ENCODE measurements at regions of chr20 and their contacts with region 1.

Region 1: DNA sequence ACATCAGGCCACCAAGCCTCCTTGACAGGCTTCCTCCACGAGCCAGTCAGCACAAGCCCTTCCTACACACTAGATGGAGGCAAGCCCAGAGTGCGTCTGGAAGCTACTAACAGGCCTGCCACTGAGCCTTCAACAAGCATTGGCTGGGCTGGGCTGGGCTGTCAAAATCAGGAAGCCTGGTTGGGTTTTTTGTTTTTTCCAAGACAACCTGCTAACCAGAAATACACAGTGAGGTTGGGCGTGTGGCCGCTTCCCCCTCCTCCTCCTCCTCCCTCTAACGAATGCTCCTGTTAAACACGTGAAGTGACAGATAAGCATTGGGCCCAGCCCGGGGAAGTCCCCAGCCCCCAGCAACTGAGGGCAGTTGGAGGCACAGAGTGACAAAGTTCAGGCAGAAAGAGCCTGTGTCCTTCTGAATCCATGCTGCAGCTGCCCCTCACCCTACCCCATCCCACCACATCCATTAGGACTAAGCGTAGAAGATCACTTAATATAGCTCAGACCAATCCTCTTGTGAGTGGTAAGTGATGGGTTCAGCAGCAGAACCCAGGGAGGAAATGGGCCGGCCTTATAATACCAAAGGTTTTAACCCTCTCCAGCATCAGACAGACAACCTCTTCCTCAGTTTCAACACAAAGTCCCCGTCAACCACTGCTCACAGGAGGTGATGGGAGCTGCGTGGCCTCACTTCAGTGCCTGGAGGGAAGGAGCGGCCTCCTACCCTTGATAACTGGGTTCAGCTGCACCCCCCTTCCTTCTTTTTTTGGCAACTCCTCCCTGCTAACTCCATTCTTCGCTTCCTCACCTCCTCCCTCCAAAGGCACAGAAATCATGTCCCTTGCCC is 1.1 kb downstream of the NFATC2 start:
- DNase-seq: no peak
- ATAC-seq: peak; percentile 77
- H3K4me3 ChIP-seq: peak overlapping the region; percentile 88
- H3K27ac ChIP-seq: peak overlapping the region; percentile 82
- H3K4me1 ChIP-seq: peaks cover 23% of the 10 kb centered on the region
- H3K27me3 ChIP-seq: no peaks in the 10 kb centered on the region; a peak in 2 of 4 replicates
- CTCF ChIP-seq: no peak
- EP300 ChIP-seq: peak in 1 of 2 experiments; percentile 66; a peak in 2 of 4 replicates
- POLR2A ChIP-seq: peak; percentile 44
- RAD21 ChIP-seq: no peak

Region 2: DNA sequence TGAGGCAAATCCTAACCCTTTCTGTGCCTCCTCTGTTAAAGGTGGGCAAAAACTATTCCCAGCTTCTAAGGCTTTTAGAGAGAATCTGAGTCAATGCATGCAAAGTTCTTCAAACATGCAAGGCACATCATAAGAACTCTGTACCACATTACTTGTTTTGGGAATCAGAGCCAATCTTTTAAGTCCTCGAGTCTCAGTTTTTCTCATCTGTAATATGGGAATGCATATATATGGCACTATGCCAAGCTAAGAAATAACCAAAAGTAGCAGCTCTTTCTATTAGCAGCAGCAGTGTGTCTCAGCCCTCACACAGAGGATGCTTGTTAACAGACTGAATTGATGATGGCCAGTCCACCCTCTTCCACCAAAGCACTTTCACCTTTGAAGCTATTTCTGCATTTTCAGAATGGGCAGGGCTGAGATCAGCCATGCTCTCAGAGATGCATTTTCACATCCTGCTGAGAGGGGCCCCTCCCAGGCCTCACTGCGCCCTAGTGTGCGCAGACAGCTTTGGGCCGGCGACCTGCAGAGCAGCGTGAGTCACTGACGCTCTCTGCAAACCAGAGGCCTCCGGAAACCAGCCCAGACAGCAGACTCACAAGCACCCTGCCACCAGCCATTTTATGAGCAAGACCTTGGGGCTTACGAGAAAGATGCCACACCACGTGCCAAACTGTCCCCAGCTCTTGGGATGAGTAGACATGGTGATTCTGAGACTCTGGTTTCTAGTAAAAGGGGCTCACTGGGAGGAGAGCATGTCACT is 136.9 kb before region 1 on chr20:
- CTCF ChIA-PET with region 1: no interaction called
- POLR2A ChIA-PET with region 1: interaction called, 4 read pairs
- RAD21 ChIA-PET with region 1: interaction called, 22 read pairs
- SMC1A ChIA-PET with region 1: interaction called, 8 read pairs
- in situ Hi-C with region 1: no loop called
- intact Hi-C with region 1: loop called (anchors 5 kb)
- DNase-seq: peak; percentile 80
- ATAC-seq: peak; percentile 88
- H3K4me3 ChIP-seq: no peak overlapping the region
- H3K27ac ChIP-seq: peak overlapping the region; percentile 73
- H3K4me1 ChIP-seq: peaks cover 61% of the 10 kb centered on the region
- H3K27me3 ChIP-seq: no peaks in the 10 kb centered on the region
- CTCF ChIP-seq: no peak
- EP300 ChIP-seq: peak; percentile 16 to 77; a peak in 2 of 4 replicates
- POLR2A ChIP-seq: peak; percentile 70
- RAD21 ChIP-seq: no peak

Region 3: GRCh38 chr20:51460569-51461250 is 80.7 kb before region 1 on chr20:
- CTCF ChIA-PET with region 1: interaction called, 3 read pairs
- POLR2A ChIA-PET with region 1: no interaction called
- RAD21 ChIA-PET with region 1: interaction called, 10 read pairs
- SMC1A ChIA-PET with region 1: interaction called, 3 read pairs
- in situ Hi-C with region 1: no loop called
- intact Hi-C with region 1: loop called (anchors 5 kb)
- DNase-seq: peak; percentile 64
- ATAC-seq: peak; percentile 99
- H3K4me3 ChIP-seq: no peak overlapping the region
- H3K27ac ChIP-seq: peak overlapping the region; percentile 74
- H3K4me1 ChIP-seq: peaks cover 16% of the 10 kb centered on the region
- H3K27me3 ChIP-seq: no peaks in the 10 kb centered on the region
- CTCF ChIP-seq: no peak
- EP300 ChIP-seq: peak; percentile 89 to 90; a peak in 3 of 4 replicates
- POLR2A ChIP-seq: no peak
- RAD21 ChIP-seq: peak; percentile 7; the same call in 1 of the 2 replicates

Region 4: GRCh38 chr20:51500311-51500710 is 41.1 kb before region 1 on chr20:
- CTCF ChIA-PET with region 1: interaction called, 5 read pairs
- POLR2A ChIA-PET with region 1: interaction called, 3 read pairs
- RAD21 ChIA-PET with region 1: interaction called, 6 read pairs
- SMC1A ChIA-PET with region 1: interaction called, 13 read pairs
- in situ Hi-C with region 1: no loop called
- intact Hi-C with region 1: no loop called
- DNase-seq: peak; percentile 37
- ATAC-seq: peak; percentile 89
- H3K4me3 ChIP-seq: no peak overlapping the region
- H3K27ac ChIP-seq: peak overlapping the region; percentile 34; the same call in 1 of the 2 replicates
- H3K4me1 ChIP-seq: peaks cover 51% of the 10 kb centered on the region
- H3K27me3 ChIP-seq: no peaks in the 10 kb centered on the region
- CTCF ChIP-seq: no peak
- EP300 ChIP-seq: no peak
- POLR2A ChIP-seq: no peak
- RAD21 ChIP-seq: no peak

Region 5: GRCh38 chr20:51562332-51563155 is 21.1 kb after region 1 on chr20:
- CTCF ChIA-PET with region 1: no interaction called
- POLR2A ChIA-PET with region 1: no interaction called
- RAD21 ChIA-PET with region 1: no interaction called
- SMC1A ChIA-PET with region 1: no interaction called
- in situ Hi-C with region 1: no loop called
- intact Hi-C with region 1: no loop called
- DNase-seq: no peak
- ATAC-seq: peak; percentile 59
- H3K4me3 ChIP-seq: peak overlapping the region; percentile 22; the same call in 1 of the 2 replicates
- H3K27ac ChIP-seq: no peak overlapping the region
- H3K4me1 ChIP-seq: no peaks in the 10 kb centered on the region; the same call in 1 of the 2 replicates
- H3K27me3 ChIP-seq: peaks cover 13 to 33% of the 10 kb centered on the region in 2 experiments
- CTCF ChIP-seq: peak in 1 of 3 experiments; percentile 14; a peak in 1 of 6 replicates
- EP300 ChIP-seq: no peak
- POLR2A ChIP-seq: no peak
- RAD21 ChIP-seq: no peak; the same call in 1 of the 2 replicates

Measured in GM12878 (cell line).